Posterior cingulate gyrus (tissue), 11 donors: ENCODE measurements at regions of chr14 and their contacts with region 1.

Region 1: DNA sequence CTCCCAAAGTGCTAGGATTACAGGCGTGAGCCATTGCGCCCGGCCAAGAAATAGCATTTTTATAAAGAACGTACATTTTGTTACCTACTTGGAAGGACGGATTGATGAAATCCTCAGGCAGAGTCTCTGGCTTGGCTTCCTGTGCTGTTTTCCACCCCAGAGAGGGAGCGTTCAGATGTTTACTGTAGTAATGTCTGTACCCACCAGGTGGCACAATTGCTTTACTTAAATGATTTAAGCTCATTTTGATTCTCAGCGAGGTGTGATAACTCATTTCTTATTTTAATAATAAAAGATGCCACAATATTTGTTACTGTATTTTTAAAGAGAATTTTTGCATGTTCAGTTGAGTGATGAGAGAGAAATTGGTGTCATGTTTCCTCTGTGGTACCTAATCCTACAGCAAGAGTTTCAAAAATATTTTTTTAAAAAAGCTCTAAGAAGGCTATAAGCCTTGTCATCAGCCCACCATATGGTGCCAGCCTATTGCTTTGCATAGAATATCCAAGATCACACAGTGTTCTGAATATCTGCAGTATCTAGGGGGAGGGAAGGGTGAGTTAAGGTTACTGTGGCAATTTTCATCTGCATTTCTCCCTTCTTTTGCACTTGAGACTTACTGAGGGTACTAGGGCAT is 82.6 kb upstream of the TRAF3 start:
- DNase-seq: peak in 5 of 10 donors; percentile 15 to 55 (median 43)

Region 2: DNA sequence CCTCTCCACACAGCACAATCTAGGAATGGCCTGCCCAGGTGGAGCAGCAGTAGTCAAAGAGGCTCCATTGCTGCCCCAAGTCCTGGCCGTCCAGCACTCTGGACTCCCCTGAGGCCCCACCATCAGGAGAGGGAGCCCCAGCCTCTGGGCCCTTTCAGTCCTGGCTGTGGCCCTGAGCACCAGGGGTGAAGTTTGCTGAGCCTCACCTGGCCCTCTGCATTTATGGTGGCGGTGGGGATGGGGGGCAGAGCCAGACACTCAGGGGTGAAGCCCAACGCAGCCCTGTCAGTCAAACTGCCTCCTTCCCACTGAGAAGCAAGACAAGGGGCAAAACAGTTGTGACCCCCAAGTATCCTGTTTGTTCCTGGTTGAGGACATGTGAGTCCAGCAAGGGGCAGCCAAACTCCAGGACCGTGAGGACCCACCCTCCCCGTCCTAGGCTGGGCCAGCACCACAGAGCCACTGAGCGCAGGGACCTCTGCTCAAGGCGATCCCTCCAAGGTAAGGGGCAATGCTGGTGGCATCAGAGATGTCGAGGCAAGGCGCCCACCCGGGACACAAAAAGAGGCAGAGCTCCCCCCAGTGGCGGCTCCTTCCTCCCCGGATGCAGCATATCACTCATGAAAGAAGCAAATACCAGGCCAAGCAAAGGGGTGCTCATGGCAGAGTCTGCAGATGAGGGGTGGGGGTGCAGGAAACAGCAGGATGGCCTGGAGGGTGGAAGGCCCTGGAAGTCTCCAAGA is 223.0 kb after region 1 on chr14:
- intact Hi-C with region 1: loop called (anchors 2 kb)
- DNase-seq: peak in 8 of 10 donors; percentile 52 to 94 (median 60)

Region 3: GRCh38 chr14:103078093-103078749 is 383.6 kb after region 1 on chr14:
- intact Hi-C with region 1: loop called (anchors 5 kb)
- DNase-seq: peak; percentile 40 to 96 (median 78)

Region 4: DNA sequence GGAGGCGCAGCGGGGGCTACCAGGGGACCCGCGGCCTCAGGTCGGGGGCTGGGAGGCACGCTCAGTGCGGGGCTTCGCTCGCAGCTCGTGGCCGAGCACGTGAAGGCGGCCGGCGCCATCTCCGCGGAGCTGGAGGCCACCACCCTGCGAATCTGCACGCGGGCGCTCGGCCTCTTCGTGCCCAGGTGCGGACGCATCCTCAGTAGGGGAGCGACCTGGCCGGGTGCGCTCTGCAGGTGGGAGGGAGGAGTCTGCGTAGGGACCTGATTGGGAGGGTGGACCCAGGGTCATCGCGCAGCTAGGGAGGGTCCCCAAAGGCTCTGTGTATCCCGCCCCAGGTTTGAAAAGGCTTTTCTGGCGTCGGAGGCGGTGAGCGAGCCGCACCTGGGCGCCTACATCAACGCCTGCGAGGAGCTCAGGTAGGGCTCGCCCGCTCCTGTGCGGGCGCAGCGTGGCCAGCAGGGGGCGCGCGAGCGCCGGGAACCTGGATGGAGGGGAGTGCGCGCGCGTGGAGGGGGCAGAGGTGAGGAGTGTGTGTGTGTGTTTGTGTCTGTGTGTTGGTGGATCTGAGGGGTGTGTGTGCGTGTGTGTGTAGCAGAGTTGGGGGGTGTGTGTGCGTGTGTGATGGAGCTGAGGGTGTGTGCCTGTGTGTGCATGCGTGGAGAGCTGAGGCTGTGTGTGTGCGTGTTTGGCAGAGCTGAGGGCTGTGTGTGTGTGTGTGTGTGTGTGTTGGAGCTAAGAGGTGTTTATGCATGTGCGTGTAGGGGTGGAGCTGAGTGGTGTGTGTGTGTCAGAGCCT is 410.2 kb after region 1 on chr14:
- intact Hi-C with region 1: no loop called
- DNase-seq: peak in 9 of 10 donors; percentile 49 to 94 (median 69)

Region 5: GRCh38 chr14:103292426-103293374 is 598.1 kb after region 1 on chr14:
- intact Hi-C with region 1: loop called (anchors 2 kb)
- DNase-seq: peak; percentile 62 to 96 (median 87)